Vagina (tissue), 2 donors: ENCODE measurements at regions of chr12 and their contacts with region 1.

Region 1: DNA sequence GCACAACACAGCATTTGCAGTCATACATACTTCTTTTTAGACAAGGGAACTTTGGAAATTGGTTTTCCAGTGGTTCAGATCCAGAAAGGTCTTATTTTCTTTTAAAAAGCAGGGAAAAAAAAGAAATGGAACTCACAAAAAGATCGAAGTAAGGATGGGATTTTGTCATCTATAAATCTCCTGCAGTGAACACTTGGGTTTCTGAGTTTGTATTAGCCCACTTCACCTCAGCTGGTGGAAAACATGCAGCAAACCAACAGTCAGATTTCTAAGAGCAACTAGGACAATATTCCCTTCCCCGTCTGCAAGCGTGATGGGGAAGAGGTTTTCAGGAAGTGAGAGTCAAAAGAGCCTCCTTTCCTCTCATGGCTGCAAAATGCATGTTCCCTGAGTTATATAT is 4.6 kb downstream of the MYF5 start:
- DNase-seq: no peak
- H3K4me3 ChIP-seq: no peak overlapping the region
- H3K27ac ChIP-seq: no peak overlapping the region
- H3K4me1 ChIP-seq: no peaks in the 10 kb centered on the region
- H3K27me3 ChIP-seq: no peaks in the 10 kb centered on the region
- CTCF ChIP-seq: no peak
- POLR2A ChIP-seq: no peak

Region 2: DNA sequence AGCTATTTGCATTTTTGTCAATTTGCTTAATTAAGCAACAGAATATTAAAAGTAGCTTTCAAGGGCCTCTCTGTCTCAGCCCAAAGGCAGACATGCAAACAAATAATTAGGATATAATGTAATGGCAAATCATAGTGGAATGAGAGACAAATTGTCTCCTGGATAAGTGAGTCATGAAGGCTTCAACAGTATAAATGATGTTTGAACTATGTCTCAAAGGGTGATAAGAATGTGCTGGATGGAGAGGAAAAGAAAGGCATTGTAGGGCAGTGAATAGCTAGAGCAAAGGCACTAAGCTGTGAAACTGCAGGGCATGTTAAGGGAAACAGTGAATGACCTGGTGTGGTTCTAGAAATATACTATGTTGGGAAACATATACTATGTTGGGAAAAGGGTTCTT is 733.0 kb before region 1 on chr12:
- intact Hi-C with region 1: loop called (anchors 5 kb)
- DNase-seq: no peak
- H3K4me3 ChIP-seq: no peak overlapping the region
- H3K27ac ChIP-seq: no peak overlapping the region
- H3K4me1 ChIP-seq: no peaks in the 10 kb centered on the region
- H3K27me3 ChIP-seq: no peaks in the 10 kb centered on the region
- CTCF ChIP-seq: no peak
- POLR2A ChIP-seq: no peak

Region 3: DNA sequence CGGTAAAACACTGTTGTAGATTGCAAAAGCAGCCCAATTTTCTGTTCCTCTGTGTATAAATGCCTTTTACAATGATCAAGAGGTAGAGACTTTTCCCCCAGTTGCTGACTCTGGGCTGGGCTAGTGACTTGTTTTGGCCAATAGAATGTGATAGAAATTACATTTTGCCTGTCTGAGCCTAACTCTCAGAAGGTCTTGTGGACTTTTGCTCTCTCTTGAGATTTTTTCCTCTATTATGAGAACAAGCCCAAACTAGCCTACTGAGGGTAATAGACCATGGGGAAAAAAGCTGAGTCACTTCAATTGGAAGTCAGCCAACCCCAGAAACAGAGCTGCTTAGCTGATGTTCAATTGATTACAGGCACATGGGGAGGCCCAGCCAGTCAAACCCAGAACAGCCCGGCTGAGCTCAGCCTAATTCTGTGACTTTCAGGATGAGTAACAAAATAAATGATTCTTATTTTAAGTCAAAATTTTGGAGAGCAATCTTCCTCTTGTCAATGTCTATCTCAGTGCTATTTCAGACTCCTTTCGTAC is 56.7 kb after region 1 on chr12:
- intact Hi-C with region 1: no loop called
- DNase-seq: no peak
- H3K4me3 ChIP-seq: no peak overlapping the region
- H3K27ac ChIP-seq: peak overlapping the region; percentile 74
- H3K4me1 ChIP-seq: peaks cover 16% of the 10 kb centered on the region
- H3K27me3 ChIP-seq: no peaks in the 10 kb centered on the region
- CTCF ChIP-seq: no peak
- POLR2A ChIP-seq: no peak

Region 4: DNA sequence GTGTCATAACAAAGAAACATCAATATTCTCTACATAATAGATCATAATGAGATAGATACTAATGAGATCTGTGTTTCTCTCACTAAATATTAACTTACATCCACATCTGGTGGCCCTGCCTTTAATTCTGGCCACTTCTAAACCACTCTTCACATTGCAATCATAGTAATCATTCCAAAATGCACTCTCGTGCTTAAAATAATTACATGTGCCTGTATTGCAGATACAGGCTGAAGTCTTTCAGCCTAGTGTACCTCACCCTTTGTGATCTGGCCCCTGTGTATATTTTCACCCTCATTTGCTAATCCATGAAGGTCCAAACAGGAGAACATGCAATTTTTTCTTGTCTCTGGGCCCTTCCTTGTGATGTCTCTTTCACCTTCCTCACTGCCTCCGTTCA is 108.4 kb after region 1 on chr12:
- intact Hi-C with region 1: no loop called
- DNase-seq: no peak
- H3K4me3 ChIP-seq: no peak overlapping the region
- H3K27ac ChIP-seq: no peak overlapping the region
- H3K4me1 ChIP-seq: no peaks in the 10 kb centered on the region
- H3K27me3 ChIP-seq: no peaks in the 10 kb centered on the region
- CTCF ChIP-seq: no peak
- POLR2A ChIP-seq: no peak